ENCODE measurements at regions of chr9 and their contacts with region 1.

Region 1: DNA sequence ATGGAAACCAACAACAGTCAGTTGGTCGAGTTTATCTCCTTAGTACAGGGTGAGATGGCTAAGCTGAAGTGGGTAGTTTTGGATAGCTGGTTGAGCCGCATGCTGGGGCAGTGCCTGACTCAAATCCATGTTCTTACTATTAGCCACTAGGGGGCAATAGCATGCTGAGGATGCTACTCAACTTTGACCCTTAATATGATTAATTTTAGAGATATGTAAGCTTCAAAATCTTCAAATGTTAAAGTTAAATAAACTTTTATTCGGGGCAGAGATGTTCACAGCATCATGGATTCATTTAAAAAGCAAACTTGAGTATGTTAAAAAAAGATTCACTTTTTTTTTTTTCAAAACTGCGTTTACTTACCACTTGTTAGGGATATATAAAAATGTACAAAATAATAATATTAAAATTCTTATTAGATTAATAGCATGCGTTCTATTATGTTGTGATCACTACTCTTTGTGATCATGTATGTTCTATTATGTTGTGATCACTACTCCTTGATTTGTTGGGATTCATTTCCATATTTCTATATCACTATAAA is 57.0 kb downstream of the C9orf153 start:
- DNase-seq: no peak
- H3K4me3 ChIP-seq: no peak overlapping the region
- H3K27ac ChIP-seq: no peak overlapping the region
- H3K4me1 ChIP-seq: peaks cover 0 to 2% (median 0%) of the 10 kb centered on the region in 4 experiments; a peak in 1 of 7 replicates
- H3K27me3 ChIP-seq: no peaks in the 10 kb centered on the region
- CTCF ChIP-seq: peak; percentile 45 to 83 (median 71)
- EP300 ChIP-seq: no peak
- POLR2A ChIP-seq: no peak
- RAD21 ChIP-seq: peak; percentile 82 to 84

Region 2: DNA sequence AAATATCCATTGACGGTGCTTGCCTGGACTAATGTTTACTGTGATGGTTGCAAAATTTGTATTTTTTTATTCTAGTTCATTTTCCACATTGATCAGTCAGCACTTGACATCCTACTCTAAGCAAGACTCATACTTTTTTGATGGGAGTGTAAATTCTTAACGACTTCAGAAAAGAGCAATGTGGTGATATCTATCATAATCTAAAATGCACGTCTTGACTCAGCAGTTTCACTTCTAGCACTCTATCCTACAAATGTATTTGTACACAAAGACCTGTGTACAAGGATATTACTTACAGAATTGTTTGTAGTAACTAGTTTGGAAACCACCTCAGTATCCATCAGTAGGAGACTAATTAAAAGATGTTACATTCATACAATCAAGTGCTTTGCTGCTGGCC is 237.5 kb before region 1 on chr9:
- CTCF ChIA-PET with region 1: no interaction called
- POLR2A ChIA-PET with region 1: no interaction called
- DNase-seq: no peak
- H3K4me3 ChIP-seq: no peak overlapping the region
- H3K27ac ChIP-seq: no peak overlapping the region
- H3K4me1 ChIP-seq: no peaks in the 10 kb centered on the region
- H3K27me3 ChIP-seq: no peaks in the 10 kb centered on the region
- CTCF ChIP-seq: no peak
- EP300 ChIP-seq: no peak
- POLR2A ChIP-seq: no peak
- RAD21 ChIP-seq: no peak

Region 3: DNA sequence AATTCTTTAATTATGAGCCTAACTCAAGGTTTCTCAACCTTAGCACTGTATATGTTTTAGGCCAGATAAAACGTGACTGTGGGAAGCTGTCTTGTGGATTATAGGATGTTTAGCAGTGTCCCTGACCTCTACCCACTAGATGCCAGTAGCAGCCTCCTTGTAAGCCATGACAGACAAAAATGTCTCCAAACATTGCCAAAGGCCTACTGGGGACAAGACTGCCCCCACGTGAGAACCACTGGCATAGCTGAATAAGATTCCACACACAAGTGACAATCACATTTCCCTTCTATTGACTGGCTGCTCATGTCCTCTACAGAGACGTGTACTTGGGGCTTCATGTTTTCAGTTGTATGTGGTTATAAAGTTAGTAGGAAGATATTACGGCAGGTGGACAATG is 158.4 kb before region 1 on chr9:
- CTCF ChIA-PET with region 1: interaction called, 11 read pairs
- POLR2A ChIA-PET with region 1: no interaction called
- DNase-seq: no peak
- H3K4me3 ChIP-seq: no peak overlapping the region
- H3K27ac ChIP-seq: no peak overlapping the region
- H3K4me1 ChIP-seq: no peaks in the 10 kb centered on the region
- H3K27me3 ChIP-seq: no peaks in the 10 kb centered on the region
- CTCF ChIP-seq: peak; percentile 21 to 86 (median 63)
- EP300 ChIP-seq: no peak
- POLR2A ChIP-seq: no peak
- RAD21 ChIP-seq: peak; percentile 64 to 70

Region 4: DNA sequence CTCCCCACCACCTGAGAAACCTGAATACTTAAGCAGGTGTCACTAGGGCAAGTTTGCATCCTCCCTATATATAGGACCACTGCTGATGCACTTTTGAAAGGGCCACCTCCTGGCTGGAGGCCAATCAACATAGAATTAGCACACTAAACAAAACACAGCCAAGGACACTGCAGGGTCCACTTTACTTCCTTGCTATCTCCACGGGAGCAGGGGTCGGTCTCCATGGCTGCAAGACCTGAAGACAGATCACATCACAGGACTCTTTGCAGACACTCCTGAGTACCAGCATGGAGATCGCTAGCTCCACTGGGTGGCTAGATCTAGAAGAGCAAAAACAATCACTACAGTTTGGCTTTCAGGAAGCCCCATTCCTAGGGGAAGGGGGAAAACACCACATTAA is 15.3 kb before region 1 on chr9:
- CTCF ChIA-PET with region 1: interaction called, 36 read pairs
- POLR2A ChIA-PET with region 1: no interaction called
- DNase-seq: peak in 1 of 2 experiments; percentile 55
- H3K4me3 ChIP-seq: no peak overlapping the region
- H3K27ac ChIP-seq: no peak overlapping the region
- H3K4me1 ChIP-seq: peaks cover under 1 to 7% (median 6%) of the 10 kb centered on the region in 4 experiments; a peak in 4 of 7 replicates
- H3K27me3 ChIP-seq: no peaks in the 10 kb centered on the region; a peak in 1 of 7 replicates
- CTCF ChIP-seq: peak; percentile 9 to 63 (median 53)
- EP300 ChIP-seq: peak; percentile 11 to 74; a peak in 2 of 3 replicates
- POLR2A ChIP-seq: no peak
- RAD21 ChIP-seq: peak; percentile 67 to 75

Region 5: GRCh38 chr9:86222667-86223066 is 20.3 kb after region 1 on chr9:
- CTCF ChIA-PET with region 1: interaction called, 27 read pairs
- POLR2A ChIA-PET with region 1: no interaction called
- DNase-seq: no peak
- H3K4me3 ChIP-seq: no peak overlapping the region
- H3K27ac ChIP-seq: no peak overlapping the region
- H3K4me1 ChIP-seq: no peaks in the 10 kb centered on the region
- H3K27me3 ChIP-seq: no peaks in the 10 kb centered on the region
- CTCF ChIP-seq: no peak
- EP300 ChIP-seq: no peak
- POLR2A ChIP-seq: no peak
- RAD21 ChIP-seq: no peak

Region 6: DNA sequence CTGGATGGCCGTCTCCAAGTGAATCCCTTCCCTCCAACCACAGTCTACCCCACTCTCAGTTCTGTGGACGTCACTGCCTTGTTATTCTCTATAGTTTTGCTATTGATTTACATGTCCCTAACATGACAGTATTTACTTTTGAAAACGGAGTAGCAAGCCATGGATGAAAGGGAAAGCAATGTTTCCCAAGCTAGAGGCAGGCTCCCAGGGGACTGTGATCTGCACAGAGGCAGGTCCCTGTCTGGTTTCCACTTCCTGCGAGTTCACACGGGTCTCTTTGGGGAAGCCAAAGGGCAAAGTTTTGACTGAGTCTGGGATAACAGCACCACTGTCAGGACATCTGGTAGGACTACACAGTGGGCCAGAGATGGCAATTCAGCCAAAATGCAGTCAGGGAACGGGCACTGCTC is 44.3 kb after region 1 on chr9:
- CTCF ChIA-PET with region 1: interaction called, 16 read pairs
- POLR2A ChIA-PET with region 1: no interaction called
- DNase-seq: no peak
- H3K4me3 ChIP-seq: no peak overlapping the region
- H3K27ac ChIP-seq: no peak overlapping the region
- H3K4me1 ChIP-seq: no peaks in the 10 kb centered on the region; a peak in 2 of 7 replicates
- H3K27me3 ChIP-seq: no peaks in the 10 kb centered on the region
- CTCF ChIP-seq: peak; percentile 27 to 46 (median 44)
- EP300 ChIP-seq: no peak
- POLR2A ChIP-seq: no peak
- RAD21 ChIP-seq: peak; percentile 62 to 75

Region 7: GRCh38 chr9:86262452-86262851 is 60.0 kb after region 1 on chr9:
- CTCF ChIA-PET with region 1: interaction called, 17 read pairs
- POLR2A ChIA-PET with region 1: no interaction called
- DNase-seq: no peak
- H3K4me3 ChIP-seq: no peak overlapping the region
- H3K27ac ChIP-seq: no peak overlapping the region
- H3K4me1 ChIP-seq: peaks cover 0 to 4% (median 0%) of the 10 kb centered on the region in 4 experiments; a peak in 1 of 7 replicates
- H3K27me3 ChIP-seq: no peaks in the 10 kb centered on the region
- CTCF ChIP-seq: no peak
- EP300 ChIP-seq: no peak
- POLR2A ChIP-seq: no peak
- RAD21 ChIP-seq: no peak